ENCODE measurements at regions of chr9 and their contacts with region 1.

Region 1: GRCh38 chr9:99221621-99222415 is at the starts of genes ALG2 and SEC61B:
- DNase-seq: peak; percentile 92 to 95 (median 93)
- H3K4me3 ChIP-seq: peak within 1 kb of the TSS; percentile 57 to 78
- H3K4me3 Mint-ChIP-seq: peak within 1 kb of the TSS; percentile 95 to 100 (median 98)
- H3K27ac ChIP-seq: peak within 1 kb of the TSS; percentile 82
- H3K27ac Mint-ChIP-seq: peak within 1 kb of the TSS; percentile 99 to 100 (median 100)
- H3K4me1 ChIP-seq: peaks cover 54% of the 10 kb centered on the region
- H3K4me1 Mint-ChIP-seq: peaks cover 51 to 93% (median 74%) of the 10 kb centered on the region in 4 donors
- H3K27me3 ChIP-seq: no peaks in the 10 kb centered on the region
- H3K27me3 Mint-ChIP-seq: no peaks in the 10 kb centered on the region
- total RNA-seq, gene ALG2: 39.1 to 39.8 TPM
- total RNA-seq, gene SEC61B: 101 to 106 TPM

Region 2: GRCh38 chr9:98807070-98807810 is 414.6 kb before region 1 on chr9 and contains the start of gene GALNT12:
- CTCF ChIA-PET with region 1: no interaction called
- POLR2A ChIA-PET with region 1: no interaction called
- intact Hi-C with region 1: loop called (anchors 5 kb)
- DNase-seq: peak; percentile 37 to 52 (median 46)
- H3K4me3 ChIP-seq: peak within 1 kb of the TSS in 1 of 2 donors; percentile 39
- H3K4me3 Mint-ChIP-seq: peak within 1 kb of the TSS; percentile 88 to 93 (median 89)
- H3K27ac ChIP-seq: no peak within 1 kb of the TSS
- H3K27ac Mint-ChIP-seq: peak within 1 kb of the TSS in 5 of 7 donors; percentile 42 to 76 (median 59)
- H3K4me1 ChIP-seq: peaks cover 17% of the 10 kb centered on the region
- H3K4me1 Mint-ChIP-seq: peaks cover 16 to 29% (median 26%) of the 10 kb centered on the region in 4 donors
- H3K27me3 ChIP-seq: no peaks in the 10 kb centered on the region
- H3K27me3 Mint-ChIP-seq: peaks cover 3 to 4% of the 10 kb centered on the region in 2 donors
- total RNA-seq, gene GALNT12: 11.1 to 13.8 TPM